SK-N-SH (cell line): ENCODE measurements at regions of chr3 and their contacts with region 1.

Region 1: GRCh38 chr3:50260027-50260941 is 8.7 kb upstream of the SEMA3B start:
- DNase-seq: peak; percentile 99
- H3K4me3 ChIP-seq: peak overlapping the region; percentile 59 to 60
- H3K27ac ChIP-seq: peak overlapping the region; percentile 76 to 94
- H3K4me1 ChIP-seq: peaks cover 24 to 32% of the 10 kb centered on the region in 2 experiments; a peak in 3 of 4 replicates
- H3K27me3 ChIP-seq: no peaks in the 10 kb centered on the region
- CTCF ChIP-seq: peak; percentile 82
- EP300 ChIP-seq: peak in 1 of 2 experiments; percentile 33; a peak in 1 of 4 replicates
- RAD21 ChIP-seq: peak; percentile 71

Region 2: DNA sequence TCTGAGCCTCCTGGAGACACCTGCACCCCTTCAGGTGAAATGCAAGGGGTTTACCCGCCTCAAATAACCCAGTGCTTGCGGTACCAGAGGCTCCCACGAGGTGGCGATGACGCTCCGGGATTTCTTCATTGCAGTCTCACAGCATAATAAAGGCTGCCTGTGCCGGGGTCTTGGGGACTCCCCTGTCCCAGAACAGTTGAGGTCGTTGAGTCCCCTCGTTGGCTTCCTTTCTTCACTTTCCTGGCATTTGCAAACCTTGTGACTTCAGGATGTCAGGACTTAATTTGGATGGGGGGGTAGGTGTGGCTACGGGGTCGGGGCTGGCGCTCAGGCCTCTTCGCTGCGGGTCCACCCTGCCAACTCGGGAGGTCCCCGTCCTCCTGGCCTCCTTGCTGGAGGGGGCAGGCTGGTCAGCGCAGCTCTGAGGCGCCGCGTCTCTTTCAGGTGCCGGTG is 67.6 kb before region 1 on chr3:
- CTCF ChIA-PET with region 1: interaction called, 1,375 read pairs
- POLR2A ChIA-PET with region 1: no interaction called
- DNase-seq: peak; percentile 88
- H3K4me3 ChIP-seq: peak overlapping the region in 1 of 2 experiments; percentile 21; a peak in 1 of 4 replicates
- H3K27ac ChIP-seq: no peak overlapping the region
- H3K4me1 ChIP-seq: peaks cover 0 to 19% of the 10 kb centered on the region in 2 experiments; a peak in 1 of 4 replicates
- H3K27me3 ChIP-seq: peaks cover 33% of the 10 kb centered on the region
- CTCF ChIP-seq: peak; percentile 90
- EP300 ChIP-seq: no peak
- RAD21 ChIP-seq: peak; percentile 89

Region 3: GRCh38 chr3:50211930-50212329 is 48.4 kb before region 1 on chr3:
- CTCF ChIA-PET with region 1: interaction called, 24 read pairs
- POLR2A ChIA-PET with region 1: no interaction called
- DNase-seq: no peak
- H3K4me3 ChIP-seq: no peak overlapping the region
- H3K27ac ChIP-seq: no peak overlapping the region
- H3K4me1 ChIP-seq: peaks cover 0 to 4% of the 10 kb centered on the region in 2 experiments; a peak in 1 of 4 replicates
- H3K27me3 ChIP-seq: no peaks in the 10 kb centered on the region
- CTCF ChIP-seq: no peak
- EP300 ChIP-seq: no peak
- RAD21 ChIP-seq: no peak

Region 4: GRCh38 chr3:50227390-50228183 is 32.7 kb before region 1 on chr3:
- CTCF ChIA-PET with region 1: interaction called, 433 read pairs
- POLR2A ChIA-PET with region 1: interaction called, 4 read pairs
- DNase-seq: peak; percentile 96
- H3K4me3 ChIP-seq: peak overlapping the region; percentile 73 to 77
- H3K27ac ChIP-seq: peak overlapping the region; percentile 16 to 84; a peak in 3 of 4 replicates
- H3K4me1 ChIP-seq: peaks cover 0 to 9% of the 10 kb centered on the region in 2 experiments; a peak in 1 of 4 replicates
- H3K27me3 ChIP-seq: peaks cover 7% of the 10 kb centered on the region; the same call in 1 of the 2 replicates
- CTCF ChIP-seq: peak; percentile 69
- EP300 ChIP-seq: peak; percentile 19 to 41; a peak in 2 of 4 replicates
- RAD21 ChIP-seq: peak; percentile 86

Region 5: DNA sequence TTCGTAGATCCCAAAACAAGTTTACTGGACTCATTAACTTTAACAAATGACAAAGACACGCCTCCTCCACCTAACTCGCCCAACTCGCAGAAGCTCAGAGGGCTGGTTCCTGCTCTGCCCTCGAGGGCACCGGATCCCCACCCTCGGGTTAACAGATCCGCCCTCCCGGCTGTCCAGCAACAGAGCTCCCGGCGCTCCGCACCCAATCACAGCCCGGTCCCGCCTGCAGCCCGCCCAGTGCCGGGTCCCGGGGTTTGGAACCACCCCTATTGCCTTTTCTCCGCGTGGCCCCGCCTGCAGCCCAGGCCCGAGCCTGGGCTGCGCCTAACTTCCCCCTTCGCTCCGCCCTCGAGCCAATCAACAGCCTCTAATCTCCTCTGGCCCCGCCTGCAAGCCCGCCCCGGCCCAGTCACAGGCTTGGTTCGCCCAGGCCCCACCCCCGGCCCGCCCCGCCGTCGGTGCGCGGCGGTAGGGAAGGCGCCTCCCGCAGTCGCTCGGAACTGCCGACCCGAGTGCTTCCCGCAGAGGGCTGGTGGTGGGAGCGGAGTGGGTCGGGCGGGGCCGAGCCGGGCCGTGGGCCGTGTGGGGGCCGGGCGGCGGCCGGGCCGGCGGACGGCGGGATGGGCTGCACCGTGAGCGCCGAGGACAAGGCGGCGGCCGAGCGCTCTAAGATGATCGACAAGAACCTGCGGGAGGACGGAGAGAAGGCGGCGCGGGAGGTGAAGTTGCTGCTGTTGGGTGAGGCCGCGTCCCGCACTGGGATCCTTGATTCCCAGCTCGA is 24.4 kb before region 1 on chr3 and contains the start of gene GNAI2:
- CTCF ChIA-PET with region 1: interaction called, 433 read pairs
- POLR2A ChIA-PET with region 1: interaction called, 10 read pairs
- DNase-seq: peak; percentile 98
- H3K4me3 ChIP-seq: peak within 1 kb of the TSS; percentile 82 to 98
- H3K27ac ChIP-seq: peak within 1 kb of the TSS; percentile 60 to 90
- H3K4me1 ChIP-seq: peaks cover 8 to 18% of the 10 kb centered on the region in 2 experiments; a peak in 2 of 4 replicates
- H3K27me3 ChIP-seq: no peaks in the 10 kb centered on the region
- CTCF ChIP-seq: no peak
- EP300 ChIP-seq: peak in 1 of 2 experiments; percentile 49; a peak in 2 of 4 replicates
- RAD21 ChIP-seq: no peak
- polyA plus RNA-seq, gene GNAI2: 641 and 649 TPM in 2 replicates

Region 6: GRCh38 chr3:50245831-50246516 is 14.3 kb before region 1 on chr3:
- CTCF ChIA-PET with region 1: interaction called, 433 read pairs
- POLR2A ChIA-PET with region 1: interaction called, 4 read pairs
- DNase-seq: peak; percentile 95
- H3K4me3 ChIP-seq: peak overlapping the region; percentile 46 to 57
- H3K27ac ChIP-seq: peak overlapping the region; percentile 72 to 89
- H3K4me1 ChIP-seq: peaks cover 35 to 36% of the 10 kb centered on the region in 2 experiments; a peak in 3 of 4 replicates
- H3K27me3 ChIP-seq: no peaks in the 10 kb centered on the region
- CTCF ChIP-seq: peak; percentile 97
- EP300 ChIP-seq: no peak
- RAD21 ChIP-seq: peak; percentile 73